Panc1 (cell line): ENCODE measurements at regions of chr12 and their contacts with region 1.

Region 1: GRCh38 chr12:105053116-105053572 is 31.1 kb downstream of the ALDH1L2 start:
- DNase-seq: peak; percentile 71
- ATAC-seq: peak; percentile 85
- H3K4me3 ChIP-seq: no peak overlapping the region
- H3K27ac ChIP-seq: no peak overlapping the region
- H3K4me1 ChIP-seq: no peaks in the 10 kb centered on the region
- H3K27me3 ChIP-seq: no peaks in the 10 kb centered on the region
- CTCF ChIP-seq: peak; percentile 88

Region 2: GRCh38 chr12:104243551-104243950 is 809.6 kb before region 1 on chr12:
- CTCF ChIA-PET with region 1: no interaction called
- POLR2A ChIA-PET with region 1: no interaction called
- in situ Hi-C with region 1: no loop called
- intact Hi-C with region 1: no loop called
- DNase-seq: no peak
- ATAC-seq: no peak
- H3K4me3 ChIP-seq: no peak overlapping the region
- H3K27ac ChIP-seq: peak overlapping the region; percentile 84
- H3K4me1 ChIP-seq: peaks cover 41% of the 10 kb centered on the region
- H3K27me3 ChIP-seq: no peaks in the 10 kb centered on the region
- CTCF ChIP-seq: no peak

Region 3: DNA sequence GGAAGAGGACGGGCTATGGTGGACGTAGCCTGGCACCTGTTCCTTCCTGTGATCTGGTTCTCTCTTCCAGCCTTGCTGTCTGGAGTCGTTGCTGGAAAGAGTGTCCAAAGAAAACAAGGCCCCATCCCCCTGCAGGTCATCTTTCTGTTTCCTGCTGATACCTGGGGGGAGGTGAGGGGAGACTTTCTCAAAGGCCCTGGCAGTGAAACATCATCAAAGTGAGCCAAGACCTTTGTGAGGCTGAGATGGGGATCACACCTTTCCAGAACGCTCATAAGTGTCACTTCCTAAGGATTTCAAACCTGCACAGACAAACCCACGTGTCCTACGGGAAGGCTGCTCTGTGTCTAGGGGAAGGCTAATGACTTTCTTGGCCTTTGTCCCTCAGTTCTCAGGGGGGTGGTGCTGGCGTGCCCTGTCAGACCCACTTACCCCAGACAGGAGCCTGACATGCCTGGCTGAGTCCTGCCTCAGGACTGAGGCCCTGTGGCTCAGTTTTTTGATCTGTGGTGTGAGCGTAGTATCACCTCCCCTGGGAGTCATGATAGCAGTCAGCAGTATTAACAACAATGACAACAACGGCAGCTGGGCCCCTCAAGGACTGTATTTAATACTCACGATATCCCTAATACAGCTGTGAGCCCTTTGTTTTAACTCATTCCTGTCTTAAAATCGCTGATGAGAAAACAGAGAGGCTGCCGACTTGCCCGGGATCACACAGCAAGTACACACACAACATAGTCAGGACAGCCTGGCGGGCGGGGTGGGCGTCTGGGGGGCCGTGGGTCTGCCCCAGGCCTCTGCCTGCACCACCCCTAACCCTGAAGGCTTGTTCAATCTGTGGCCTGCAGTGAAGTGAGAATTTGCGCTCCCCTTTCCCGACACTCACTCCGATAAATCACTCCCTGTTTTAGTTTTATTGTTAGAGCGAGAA is 330.3 kb before region 1 on chr12:
- CTCF ChIA-PET with region 1: no interaction called
- POLR2A ChIA-PET with region 1: no interaction called
- in situ Hi-C with region 1: no loop called
- intact Hi-C with region 1: no loop called
- DNase-seq: no peak
- ATAC-seq: no peak
- H3K4me3 ChIP-seq: no peak overlapping the region
- H3K27ac ChIP-seq: no peak overlapping the region
- H3K4me1 ChIP-seq: peaks cover 3% of the 10 kb centered on the region; the same call in 1 of the 2 replicates
- H3K27me3 ChIP-seq: no peaks in the 10 kb centered on the region
- CTCF ChIP-seq: no peak

Region 4: DNA sequence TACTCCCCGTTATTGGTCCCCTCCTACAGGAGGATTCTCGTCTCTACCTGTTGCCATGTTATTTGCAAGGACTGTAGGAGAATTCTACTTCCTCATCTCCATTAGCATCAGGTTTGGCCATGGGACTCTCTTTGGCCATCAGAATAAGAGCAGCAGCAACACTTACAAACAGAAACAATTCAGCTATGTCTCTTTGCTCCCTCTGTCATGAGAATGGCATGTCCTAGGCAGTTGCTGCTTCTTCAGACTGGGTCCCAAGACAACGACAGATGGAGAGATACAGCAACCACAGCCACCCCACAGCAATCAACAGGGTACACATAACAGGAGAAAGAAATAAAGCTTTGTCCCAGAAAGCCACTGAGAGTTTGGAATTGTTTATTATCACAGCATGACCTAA is 114.8 kb before region 1 on chr12:
- CTCF ChIA-PET with region 1: no interaction called
- POLR2A ChIA-PET with region 1: no interaction called
- in situ Hi-C with region 1: no loop called
- intact Hi-C with region 1: no loop called
- DNase-seq: no peak
- ATAC-seq: no peak
- H3K4me3 ChIP-seq: no peak overlapping the region
- H3K27ac ChIP-seq: no peak overlapping the region
- H3K4me1 ChIP-seq: no peaks in the 10 kb centered on the region
- H3K27me3 ChIP-seq: no peaks in the 10 kb centered on the region
- CTCF ChIP-seq: no peak

Region 5: GRCh38 chr12:104986022-104986941 is 66.9 kb before region 1 on chr12 and contains the start of gene NOPCHAP1:
- CTCF ChIA-PET with region 1: interaction called, 12 read pairs
- POLR2A ChIA-PET with region 1: no interaction called
- in situ Hi-C with region 1: no loop called
- intact Hi-C with region 1: no loop called
- DNase-seq: peak; percentile 33
- ATAC-seq: peak; percentile 100
- H3K4me3 ChIP-seq: peak within 1 kb of the TSS; percentile 74 to 87
- H3K27ac ChIP-seq: peak within 1 kb of the TSS; percentile 62
- H3K4me1 ChIP-seq: peaks cover 10% of the 10 kb centered on the region
- H3K27me3 ChIP-seq: no peaks in the 10 kb centered on the region
- CTCF ChIP-seq: no peak
- total RNA-seq, gene NOPCHAP1: 24.0 TPM

Region 6: GRCh38 chr12:105025890-105026289 is 27.3 kb before region 1 on chr12:
- CTCF ChIA-PET with region 1: no interaction called
- POLR2A ChIA-PET with region 1: no interaction called
- in situ Hi-C with region 1: no loop called
- intact Hi-C with region 1: no loop called
- DNase-seq: no peak
- ATAC-seq: no peak
- H3K4me3 ChIP-seq: no peak overlapping the region
- H3K27ac ChIP-seq: no peak overlapping the region
- H3K4me1 ChIP-seq: no peaks in the 10 kb centered on the region
- H3K27me3 ChIP-seq: no peaks in the 10 kb centered on the region
- CTCF ChIP-seq: no peak